Esophagus muscularis mucosa (tissue), 4 donors: ENCODE measurements at regions of chr6 and their contacts with region 1.

Region 1: DNA sequence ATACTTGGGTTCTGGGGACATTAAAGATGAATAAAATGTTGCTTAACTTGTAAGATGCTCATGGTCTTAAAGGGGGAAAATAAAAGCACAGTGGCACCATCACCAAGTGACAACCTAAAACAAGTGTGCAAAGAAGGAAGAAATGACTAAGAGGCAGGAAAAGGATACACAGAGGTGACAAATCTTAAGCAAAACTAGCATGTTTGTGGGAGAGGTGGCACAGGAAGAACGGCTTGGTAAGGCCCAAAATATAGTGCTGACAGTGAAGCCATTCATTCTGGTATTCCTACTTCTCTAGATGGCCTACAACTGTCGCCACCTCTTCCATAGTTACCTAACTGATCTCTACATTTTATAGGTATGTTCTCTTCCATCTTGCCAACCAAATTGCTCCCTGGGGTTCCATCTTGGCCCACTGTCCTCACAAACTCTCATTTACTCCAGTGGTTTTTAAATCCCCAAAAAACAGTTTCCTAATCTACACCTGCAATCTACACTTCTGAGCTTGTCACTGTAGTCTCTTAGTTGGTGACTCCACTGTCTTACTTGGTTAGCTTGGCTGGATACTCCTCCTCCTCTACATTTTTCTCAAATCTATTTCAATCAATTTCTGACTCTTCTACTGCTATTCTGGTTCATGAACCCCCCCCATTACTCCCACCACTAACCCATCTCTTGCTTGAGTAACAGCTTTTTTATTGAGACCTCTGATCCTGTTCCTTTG is 33.5 kb downstream of the FAM8A1 start:
- DNase-seq: no peak
- H3K4me3 ChIP-seq: no peak overlapping the region
- H3K27ac ChIP-seq: no peak overlapping the region
- H3K4me1 ChIP-seq: peaks cover 5 to 12% (median 11%) of the 10 kb centered on the region in 4 donors
- H3K27me3 ChIP-seq: no peaks in the 10 kb centered on the region
- CTCF ChIP-seq: no peak
- EP300 ChIP-seq: no peak
- POLR2A ChIP-seq: no peak

Region 2: GRCh38 chr6:17706580-17707370 is 73.1 kb after region 1 on chr6 and contains the start of gene NUP153:
- intact Hi-C with region 1: no loop called
- DNase-seq: peak; percentile 100
- H3K4me3 ChIP-seq: peak within 1 kb of the TSS; percentile 75 to 99 (median 90)
- H3K27ac ChIP-seq: peak within 1 kb of the TSS; percentile 97 to 100 (median 99)
- H3K4me1 ChIP-seq: peaks cover 33 to 40% (median 34%) of the 10 kb centered on the region in 4 donors
- H3K27me3 ChIP-seq: no peaks in the 10 kb centered on the region
- CTCF ChIP-seq: no peak
- EP300 ChIP-seq: no peak
- POLR2A ChIP-seq: peak; percentile 74
- total RNA-seq, gene NUP153: 28.4 to 32.8 (median 31.5) TPM

Region 3: DNA sequence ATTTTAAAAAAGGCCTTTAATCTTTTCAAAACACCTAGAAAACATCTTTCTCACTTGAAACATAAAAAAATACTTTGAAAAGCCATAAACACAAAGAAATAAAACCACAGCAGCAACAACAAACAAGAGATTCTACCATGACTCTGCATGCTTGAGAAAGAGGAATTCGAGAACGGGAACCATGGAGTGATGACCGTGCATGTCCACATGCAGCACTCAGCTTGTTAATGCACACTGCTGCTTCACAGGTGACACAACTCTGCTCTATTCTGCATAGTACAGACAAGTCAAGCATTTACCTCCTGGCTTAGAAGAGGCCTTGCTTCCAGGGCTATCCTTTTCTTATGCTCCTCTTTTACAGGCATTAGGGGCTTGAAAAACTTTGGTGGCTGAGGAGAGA is 138.0 kb after region 1 on chr6:
- intact Hi-C with region 1: loop called (anchors 10 kb)
- DNase-seq: no peak
- H3K4me3 ChIP-seq: no peak overlapping the region
- H3K27ac ChIP-seq: no peak overlapping the region
- H3K4me1 ChIP-seq: no peaks in the 10 kb centered on the region
- H3K27me3 ChIP-seq: no peaks in the 10 kb centered on the region
- CTCF ChIP-seq: no peak
- EP300 ChIP-seq: no peak
- POLR2A ChIP-seq: no peak

Region 4: DNA sequence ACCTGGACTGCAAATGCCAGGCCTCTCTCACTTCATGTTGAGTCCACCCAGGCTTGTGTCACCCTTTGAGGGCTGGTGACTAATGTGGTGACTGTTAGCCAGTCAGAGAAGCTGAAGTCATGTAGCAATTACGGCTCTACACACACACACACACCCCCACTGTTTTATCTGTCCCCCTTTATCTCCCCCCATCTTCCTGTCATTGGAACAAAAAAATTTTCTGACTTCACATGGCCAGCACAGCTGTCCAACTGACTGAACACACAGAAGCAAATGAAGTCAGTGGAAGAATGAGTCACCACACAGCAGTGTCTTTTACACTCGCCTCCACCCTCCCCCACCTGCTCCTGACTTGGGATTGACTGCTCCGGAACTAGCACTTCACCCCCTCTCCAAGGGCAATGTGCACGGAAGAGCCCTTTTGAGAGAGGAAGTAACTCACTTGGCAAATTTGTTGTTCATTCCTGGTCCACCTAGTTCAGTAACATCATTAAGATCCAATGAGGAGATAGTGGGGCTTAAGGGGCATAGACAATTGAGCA is 951.5 kb after region 1 on chr6:
- intact Hi-C with region 1: no loop called
- DNase-seq: no peak
- H3K4me3 ChIP-seq: no peak overlapping the region
- H3K27ac ChIP-seq: no peak overlapping the region
- H3K4me1 ChIP-seq: peaks cover 0 to 6% (median 0%) of the 10 kb centered on the region in 4 donors
- H3K27me3 ChIP-seq: no peaks in the 10 kb centered on the region
- CTCF ChIP-seq: no peak
- EP300 ChIP-seq: no peak
- POLR2A ChIP-seq: no peak